CD4-positive, alpha-beta T cell (primary cell): ENCODE measurements at regions of chr18 and their contacts with region 1.

Region 1: GRCh38 chr18:3062798-3063680 is 50.1 kb upstream of the LPIN2 start:
- DNase-seq: peak; percentile 62 to 87 (median 74)
- ATAC-seq: peak; percentile 35
- H3K4me3 ChIP-seq: peak overlapping the region; percentile 54
- H3K4me3 Mint-ChIP-seq: peak overlapping the region; percentile 43
- H3K27ac ChIP-seq: peak overlapping the region; percentile 95 to 96
- H3K27ac Mint-ChIP-seq: peak overlapping the region; percentile 96
- H3K4me1 ChIP-seq: peaks cover 63% of the 10 kb centered on the region
- H3K4me1 Mint-ChIP-seq: peaks cover 72% of the 10 kb centered on the region
- H3K27me3 ChIP-seq: no peaks in the 10 kb centered on the region
- H3K27me3 Mint-ChIP-seq: no peaks in the 10 kb centered on the region
- CTCF ChIP-seq: peak; percentile 87

Region 2: DNA sequence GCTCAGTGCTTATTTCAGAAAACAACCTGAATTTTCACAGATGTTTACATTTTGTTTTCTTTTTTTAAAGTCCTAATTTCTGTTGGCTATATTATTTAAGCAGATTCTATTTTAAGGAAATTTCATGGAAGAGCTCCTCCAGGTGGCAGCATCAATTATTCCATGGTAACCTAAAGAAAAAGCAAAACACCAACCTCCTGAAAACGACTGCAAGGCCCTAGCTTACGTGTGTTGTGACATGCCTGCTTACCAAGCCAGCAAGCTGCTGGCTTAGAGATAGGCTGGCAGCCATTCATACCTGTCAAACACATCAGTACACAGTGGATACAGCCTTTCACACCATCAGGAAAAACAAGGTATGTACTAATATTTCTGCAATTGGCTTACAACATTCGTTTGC is 115.0 kb before region 1 on chr18:
- CTCF ChIA-PET with region 1: interaction called, 10 read pairs
- POLR2A ChIA-PET with region 1: no interaction called
- intact Hi-C with region 1: no loop called
- DNase-seq: peak in 2 of 14 experiments; percentile 24 to 31
- ATAC-seq: peak; percentile 56
- H3K4me3 ChIP-seq: no peak overlapping the region
- H3K4me3 Mint-ChIP-seq: no peak overlapping the region
- H3K27ac ChIP-seq: no peak overlapping the region
- H3K27ac Mint-ChIP-seq: peak overlapping the region; percentile 51
- H3K4me1 ChIP-seq: peaks cover 13% of the 10 kb centered on the region
- H3K4me1 Mint-ChIP-seq: peaks cover 72% of the 10 kb centered on the region
- H3K27me3 ChIP-seq: no peaks in the 10 kb centered on the region
- H3K27me3 Mint-ChIP-seq: no peaks in the 10 kb centered on the region
- CTCF ChIP-seq: no peak

Region 3: GRCh38 chr18:2978646-2979045 is 84.4 kb before region 1 on chr18:
- CTCF ChIA-PET with region 1: interaction called, 7 read pairs
- POLR2A ChIA-PET with region 1: interaction called, 21 read pairs
- intact Hi-C with region 1: no loop called
- DNase-seq: peak in 4 of 14 experiments; percentile 39 to 63 (median 56)
- ATAC-seq: peak; percentile 10
- H3K4me3 ChIP-seq: peak overlapping the region; percentile 41
- H3K4me3 Mint-ChIP-seq: peak overlapping the region; percentile 88
- H3K27ac ChIP-seq: peak overlapping the region; percentile 77 to 80
- H3K27ac Mint-ChIP-seq: peak overlapping the region; percentile 89
- H3K4me1 ChIP-seq: peaks cover 66% of the 10 kb centered on the region
- H3K4me1 Mint-ChIP-seq: peaks cover 90% of the 10 kb centered on the region
- H3K27me3 ChIP-seq: no peaks in the 10 kb centered on the region
- H3K27me3 Mint-ChIP-seq: no peaks in the 10 kb centered on the region
- CTCF ChIP-seq: no peak

Region 4: DNA sequence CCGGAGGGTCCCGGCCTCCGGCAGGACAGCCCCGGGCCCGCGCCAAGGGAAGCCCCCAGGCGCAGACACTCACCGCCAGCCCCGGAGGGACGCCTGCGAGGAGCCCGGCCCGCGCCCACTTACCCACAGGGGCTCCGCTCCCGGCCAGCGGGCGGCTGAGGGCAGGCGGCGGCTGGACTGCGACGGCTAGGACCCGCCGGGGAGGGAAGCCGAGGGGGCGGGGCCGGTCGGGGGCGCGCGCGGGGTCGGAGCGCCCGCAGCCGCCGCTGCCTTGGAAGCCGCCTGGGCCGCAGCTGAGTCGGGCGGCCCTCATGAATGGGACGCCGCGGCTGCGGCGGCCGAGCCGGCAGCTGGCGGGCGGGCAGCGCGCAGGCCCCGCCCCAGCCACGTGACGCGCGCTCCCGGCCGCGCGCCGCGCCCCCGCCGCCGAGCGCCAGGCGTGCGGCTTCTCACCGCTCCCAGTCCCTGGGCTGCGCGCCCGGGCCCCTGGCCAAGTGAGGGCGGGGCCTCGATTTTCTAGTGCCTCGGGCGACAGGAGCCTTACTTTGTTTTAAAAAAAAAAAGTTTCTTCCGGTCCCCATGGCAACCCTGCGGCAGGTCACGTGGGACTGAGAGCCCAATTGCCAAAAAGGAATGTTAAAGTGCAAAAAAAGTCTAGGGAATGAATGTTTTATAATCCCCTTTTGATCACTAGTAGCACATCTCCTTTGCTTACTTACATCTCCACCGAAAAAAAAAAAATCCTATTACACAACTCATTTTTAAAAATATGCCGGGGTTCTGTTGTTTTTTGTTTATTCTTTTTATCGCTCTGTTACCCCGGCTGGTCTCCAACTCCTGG is 49.9 kb before region 1 on chr18 and contains the start of gene LPIN2:
- CTCF ChIA-PET with region 1: interaction called, 19 read pairs
- POLR2A ChIA-PET with region 1: interaction called, 120 read pairs
- intact Hi-C with region 1: loop called (anchors 2 kb)
- DNase-seq: peak; percentile 93 to 99 (median 96)
- ATAC-seq: peak; percentile 91
- H3K4me3 ChIP-seq: peak within 1 kb of the TSS; percentile 68
- H3K4me3 Mint-ChIP-seq: peak within 1 kb of the TSS; percentile 94
- H3K27ac ChIP-seq: peak within 1 kb of the TSS; percentile 34 to 59
- H3K27ac Mint-ChIP-seq: peak within 1 kb of the TSS; percentile 92
- H3K4me1 ChIP-seq: peaks cover 74% of the 10 kb centered on the region
- H3K4me1 Mint-ChIP-seq: peaks cover 72% of the 10 kb centered on the region
- H3K27me3 ChIP-seq: no peaks in the 10 kb centered on the region
- H3K27me3 Mint-ChIP-seq: no peaks in the 10 kb centered on the region
- CTCF ChIP-seq: no peak
- total RNA-seq, gene LPIN2: 48.7 to 49.0 TPM

Region 5: DNA sequence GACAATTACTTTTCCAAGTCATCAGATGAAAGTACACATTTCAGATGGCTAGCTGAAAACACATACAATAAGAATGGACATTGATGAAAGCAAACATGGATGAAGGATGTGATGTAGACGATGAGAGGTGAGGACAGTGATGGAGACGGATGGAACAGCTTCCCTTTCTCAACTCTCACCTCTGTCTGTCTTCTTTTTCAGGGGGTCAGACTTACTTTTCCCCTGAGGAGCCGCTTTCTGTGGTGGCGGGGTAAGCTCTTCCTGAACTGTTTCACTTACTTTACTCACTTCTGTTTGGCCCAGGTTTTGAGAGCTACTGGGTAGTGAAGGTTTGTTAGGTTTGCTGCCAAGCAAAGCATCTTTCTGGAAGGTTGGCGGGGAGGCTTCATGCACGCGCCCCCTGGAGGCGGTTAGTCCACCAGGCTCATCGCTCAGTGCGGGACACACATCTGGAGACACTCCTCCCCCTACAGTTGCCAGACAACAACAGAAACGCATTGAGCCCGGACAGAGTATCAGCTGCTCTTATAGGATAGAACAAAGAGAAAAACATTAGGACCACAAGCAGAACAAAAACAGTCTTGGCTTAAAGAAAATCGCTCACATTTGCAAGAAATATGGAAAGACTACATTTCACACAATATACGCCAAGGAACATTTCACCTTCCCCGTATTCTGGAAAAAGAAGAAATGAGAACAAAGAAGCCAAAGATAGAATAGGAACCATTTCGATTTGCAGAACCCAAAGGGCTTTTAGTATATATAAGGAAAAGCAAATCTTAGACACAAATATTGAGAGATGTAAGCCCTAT is 66.2 kb after region 1 on chr18:
- CTCF ChIA-PET with region 1: interaction called, 18 read pairs
- POLR2A ChIA-PET with region 1: interaction called, 13 read pairs
- intact Hi-C with region 1: loop called in 1 of 2 experiments (anchors 5 kb)
- DNase-seq: peak; percentile 67 to 90 (median 78)
- ATAC-seq: peak; percentile 99
- H3K4me3 ChIP-seq: no peak overlapping the region
- H3K4me3 Mint-ChIP-seq: no peak overlapping the region
- H3K27ac ChIP-seq: no peak overlapping the region
- H3K27ac Mint-ChIP-seq: no peak overlapping the region
- H3K4me1 ChIP-seq: peaks cover 5% of the 10 kb centered on the region
- H3K4me1 Mint-ChIP-seq: peaks cover 6% of the 10 kb centered on the region
- H3K27me3 ChIP-seq: no peaks in the 10 kb centered on the region
- H3K27me3 Mint-ChIP-seq: no peaks in the 10 kb centered on the region
- CTCF ChIP-seq: peak; percentile 94

Region 6: DNA sequence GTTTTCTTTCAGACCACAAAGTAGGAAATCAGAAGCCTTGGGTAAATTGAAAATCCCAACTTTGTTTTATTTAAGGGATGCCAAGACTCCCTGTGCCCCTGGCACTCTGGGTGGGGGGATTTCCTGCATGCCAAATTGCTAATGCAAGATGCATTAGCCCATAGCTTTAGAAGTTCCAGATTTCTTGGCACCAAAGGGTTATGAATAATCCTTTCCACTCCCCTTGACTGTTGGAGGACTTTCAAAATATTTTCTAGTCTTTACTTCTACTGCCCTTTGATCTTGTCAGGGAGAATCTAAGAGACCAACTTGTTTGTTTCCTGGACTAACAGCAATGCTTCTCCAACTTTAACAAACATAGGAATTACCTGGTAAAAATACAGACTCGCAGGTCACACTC is 305.2 kb after region 1 on chr18:
- CTCF ChIA-PET with region 1: no interaction called
- POLR2A ChIA-PET with region 1: no interaction called
- intact Hi-C with region 1: no loop called
- DNase-seq: no peak
- ATAC-seq: no peak
- H3K4me3 ChIP-seq: no peak overlapping the region
- H3K4me3 Mint-ChIP-seq: no peak overlapping the region
- H3K27ac ChIP-seq: no peak overlapping the region
- H3K27ac Mint-ChIP-seq: no peak overlapping the region
- H3K4me1 ChIP-seq: no peaks in the 10 kb centered on the region
- H3K4me1 Mint-ChIP-seq: no peaks in the 10 kb centered on the region
- H3K27me3 ChIP-seq: no peaks in the 10 kb centered on the region
- H3K27me3 Mint-ChIP-seq: peaks cover 5% of the 10 kb centered on the region
- CTCF ChIP-seq: no peak